ENCODE measurements at regions of chr10 and their contacts with region 1.

Region 1: DNA sequence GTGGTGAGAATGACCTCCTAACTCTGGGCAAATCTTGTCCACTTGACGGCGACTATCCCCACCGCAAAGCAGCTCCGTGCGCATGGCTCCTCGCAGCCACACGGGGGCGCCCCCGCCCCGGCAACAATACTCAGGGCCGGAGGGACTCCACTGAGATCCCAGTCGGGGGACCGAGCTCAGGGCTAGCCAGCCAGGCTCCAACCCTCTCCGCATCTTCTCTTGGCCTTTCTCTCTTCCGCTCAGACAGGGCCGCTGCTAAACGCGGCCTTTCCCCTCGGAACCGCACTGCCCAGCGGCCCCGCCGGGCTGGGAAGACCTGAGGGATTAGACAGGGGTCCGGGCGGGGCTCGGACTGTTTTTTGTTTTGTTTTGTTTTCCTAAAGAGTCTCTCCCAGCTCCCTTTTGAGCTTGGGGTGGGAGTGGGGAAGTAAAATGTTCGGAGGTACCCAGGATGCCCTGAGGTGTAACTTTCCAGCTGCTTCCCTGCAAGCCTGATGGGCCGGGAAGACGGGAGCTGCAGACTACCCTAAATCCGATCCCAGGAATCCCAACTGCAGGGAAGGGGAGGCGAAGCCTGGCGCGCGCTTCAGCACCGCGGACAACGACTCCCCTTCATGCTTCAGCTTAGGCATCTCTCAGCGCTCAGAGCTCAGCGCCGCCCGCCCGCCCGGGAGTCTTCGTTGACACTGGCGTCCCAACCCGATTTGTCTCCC is 2.7 kb downstream of the KCNIP2 start:
- DNase-seq: peak in 34 of 35 experiments; percentile 40 to 82 (median 59)
- ATAC-seq: peak; percentile 55 to 60 (median 57)
- H3K4me3 ChIP-seq: peak overlapping the region; percentile 42 to 65
- H3K4me3 Mint-ChIP-seq: peak overlapping the region; percentile 83 to 87 (median 83)
- H3K27ac ChIP-seq: no peak overlapping the region
- H3K27ac Mint-ChIP-seq: peak overlapping the region in 1 of 2 donors; percentile 25
- H3K4me1 ChIP-seq: peaks cover 16 to 46% of the 10 kb centered on the region in 2 experiments
- H3K4me1 Mint-ChIP-seq: peaks cover 50 to 62% (median 51%) of the 10 kb centered on the region in 3 donors
- H3K27me3 ChIP-seq: peaks cover 0 to 20% of the 10 kb centered on the region in 2 experiments
- H3K27me3 Mint-ChIP-seq: no peaks in the 10 kb centered on the region

Region 2: DNA sequence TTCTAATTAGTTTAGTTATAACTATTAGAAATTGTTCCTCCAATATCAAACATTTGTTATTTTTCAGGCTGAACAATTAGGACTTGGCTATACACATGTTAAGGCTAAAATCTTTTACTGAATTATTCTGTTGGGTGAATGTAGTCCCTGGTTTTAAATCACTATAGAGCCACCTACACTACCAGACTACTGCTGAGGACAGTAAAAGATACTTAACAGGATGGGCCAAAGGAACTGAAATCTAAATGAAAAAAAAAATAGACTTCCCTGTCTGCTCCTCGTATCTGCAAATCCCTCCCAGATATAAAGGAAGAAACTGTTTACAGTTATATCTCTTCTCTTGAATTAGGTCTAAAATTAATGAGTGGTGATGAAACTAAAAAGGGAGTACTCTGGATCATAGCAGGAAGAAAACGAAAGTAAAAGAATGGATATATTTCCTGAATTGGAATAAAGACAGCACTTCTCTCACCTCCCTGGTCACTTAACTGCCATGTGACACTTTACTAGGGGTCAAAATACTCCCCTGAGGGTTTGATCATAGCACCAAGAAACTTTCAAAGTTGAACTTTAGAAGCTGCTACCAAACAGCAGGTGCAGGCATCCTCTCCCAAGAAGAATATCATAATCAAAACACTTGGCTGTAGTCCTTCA is 158.6 kb before region 1 on chr10:
- CTCF ChIA-PET with region 1: no interaction called
- POLR2A ChIA-PET with region 1: no interaction called
- DNase-seq: no peak
- ATAC-seq: no peak
- H3K4me3 ChIP-seq: no peak overlapping the region
- H3K4me3 Mint-ChIP-seq: no peak overlapping the region
- H3K27ac ChIP-seq: no peak overlapping the region
- H3K27ac Mint-ChIP-seq: peak overlapping the region in 1 of 2 donors; percentile 48
- H3K4me1 ChIP-seq: peaks cover 0 to 4% of the 10 kb centered on the region in 2 experiments
- H3K4me1 Mint-ChIP-seq: peaks cover 41 to 47% (median 44%) of the 10 kb centered on the region in 3 donors
- H3K27me3 ChIP-seq: no peaks in the 10 kb centered on the region
- H3K27me3 Mint-ChIP-seq: no peaks in the 10 kb centered on the region

Region 3: GRCh38 chr10:101797403-101798059 is 43.4 kb before region 1 on chr10:
- CTCF ChIA-PET with region 1: interaction called in 1 of 2 experiments, 4 read pairs
- POLR2A ChIA-PET with region 1: interaction called in 1 of 2 experiments, 17 read pairs
- DNase-seq: no peak
- ATAC-seq: no peak
- H3K4me3 ChIP-seq: no peak overlapping the region
- H3K4me3 Mint-ChIP-seq: no peak overlapping the region
- H3K27ac ChIP-seq: no peak overlapping the region
- H3K27ac Mint-ChIP-seq: no peak overlapping the region
- H3K4me1 ChIP-seq: peaks cover 0 to 15% of the 10 kb centered on the region in 2 experiments
- H3K4me1 Mint-ChIP-seq: peaks cover 38 to 48% (median 41%) of the 10 kb centered on the region in 3 donors
- H3K27me3 ChIP-seq: no peaks in the 10 kb centered on the region
- H3K27me3 Mint-ChIP-seq: no peaks in the 10 kb centered on the region

Region 4: GRCh38 chr10:101818119-101818871 is 22.6 kb before region 1 on chr10 and contains the start of gene OGA:
- CTCF ChIA-PET with region 1: interaction called, 6 to 28 read pairs
- POLR2A ChIA-PET with region 1: interaction called in 1 of 2 experiments, 5 read pairs
- DNase-seq: peak; percentile 90 to 99 (median 98)
- ATAC-seq: peak; percentile 91 to 92 (median 91)
- H3K4me3 ChIP-seq: peak within 1 kb of the TSS; percentile 95 to 100
- H3K4me3 Mint-ChIP-seq: peak within 1 kb of the TSS; percentile 94 to 99 (median 98)
- H3K27ac ChIP-seq: peak within 1 kb of the TSS; percentile 74
- H3K27ac Mint-ChIP-seq: peak within 1 kb of the TSS; percentile 96 to 98
- H3K4me1 ChIP-seq: peaks cover 26 to 29% of the 10 kb centered on the region in 2 experiments
- H3K4me1 Mint-ChIP-seq: peaks cover 41 to 61% (median 46%) of the 10 kb centered on the region in 3 donors
- H3K27me3 ChIP-seq: no peaks in the 10 kb centered on the region
- H3K27me3 Mint-ChIP-seq: no peaks in the 10 kb centered on the region
- total RNA-seq, gene OGA: 232 to 364 (median 244) TPM

Region 5: GRCh38 chr10:101889256-101890210 is 48.6 kb after region 1 on chr10:
- CTCF ChIA-PET with region 1: interaction called, 5 to 17 read pairs
- POLR2A ChIA-PET with region 1: no interaction called
- DNase-seq: peak; percentile 19 to 72 (median 57)
- ATAC-seq: peak; percentile 58 to 61 (median 60)
- H3K4me3 ChIP-seq: no peak overlapping the region
- H3K4me3 Mint-ChIP-seq: no peak overlapping the region
- H3K27ac ChIP-seq: no peak overlapping the region
- H3K27ac Mint-ChIP-seq: peak overlapping the region in 1 of 2 donors; percentile 11
- H3K4me1 ChIP-seq: no peaks in the 10 kb centered on the region
- H3K4me1 Mint-ChIP-seq: peaks cover 0 to 6% (median 2%) of the 10 kb centered on the region in 3 donors
- H3K27me3 ChIP-seq: no peaks in the 10 kb centered on the region
- H3K27me3 Mint-ChIP-seq: no peaks in the 10 kb centered on the region

Region 6: DNA sequence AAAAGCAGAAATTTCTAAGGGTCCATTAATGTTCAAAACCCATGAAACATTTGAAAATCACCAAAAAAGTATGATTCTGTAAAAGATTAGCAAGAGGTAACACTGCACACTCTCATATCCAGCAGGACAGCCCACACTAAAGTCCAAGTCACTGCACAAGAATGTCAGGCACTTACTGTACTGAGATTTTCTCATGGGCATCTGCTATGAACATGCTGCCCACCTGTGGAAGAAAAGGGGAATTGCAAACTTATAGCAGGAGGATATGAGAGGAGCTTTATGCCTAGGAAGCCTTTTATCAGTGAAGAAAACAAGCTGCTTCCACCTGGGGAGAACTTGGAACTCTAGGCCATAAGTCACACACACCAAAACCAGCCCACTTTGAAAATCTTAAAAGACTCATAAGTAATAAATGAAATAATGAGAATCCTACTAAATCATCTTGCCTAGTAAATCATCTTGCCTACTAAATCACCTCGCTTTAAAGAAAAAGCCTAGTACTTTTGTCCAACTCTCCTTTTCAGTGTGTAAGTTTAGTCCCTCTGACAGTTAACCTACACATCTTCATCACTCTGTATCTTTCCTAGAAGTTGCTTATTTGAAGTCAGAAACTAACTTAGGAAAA is 169.0 kb after region 1 on chr10:
- CTCF ChIA-PET with region 1: interaction called, 4 to 62 read pairs
- POLR2A ChIA-PET with region 1: no interaction called
- DNase-seq: peak in 28 of 35 experiments; percentile 1 to 71 (median 18)
- ATAC-seq: peak; percentile 76 to 84 (median 79)
- H3K4me3 ChIP-seq: no peak overlapping the region
- H3K4me3 Mint-ChIP-seq: no peak overlapping the region
- H3K27ac ChIP-seq: no peak overlapping the region
- H3K27ac Mint-ChIP-seq: no peak overlapping the region
- H3K4me1 ChIP-seq: no peaks in the 10 kb centered on the region
- H3K4me1 Mint-ChIP-seq: peaks cover 0 to 10% (median 0%) of the 10 kb centered on the region in 3 donors
- H3K27me3 ChIP-seq: no peaks in the 10 kb centered on the region
- H3K27me3 Mint-ChIP-seq: no peaks in the 10 kb centered on the region

Region 7: GRCh38 chr10:102072673-102073527 is 232.0 kb after region 1 on chr10:
- CTCF ChIA-PET with region 1: interaction called, 6 to 16 read pairs
- POLR2A ChIA-PET with region 1: no interaction called
- DNase-seq: peak; percentile 43 to 88 (median 74)
- ATAC-seq: peak; percentile 86 to 96 (median 91)
- H3K4me3 ChIP-seq: no peak overlapping the region
- H3K4me3 Mint-ChIP-seq: no peak overlapping the region
- H3K27ac ChIP-seq: no peak overlapping the region
- H3K27ac Mint-ChIP-seq: no peak overlapping the region
- H3K4me1 ChIP-seq: peaks cover 0 to 4% of the 10 kb centered on the region in 2 experiments
- H3K4me1 Mint-ChIP-seq: peaks cover 12 to 14% (median 14%) of the 10 kb centered on the region in 3 donors
- H3K27me3 ChIP-seq: no peaks in the 10 kb centered on the region
- H3K27me3 Mint-ChIP-seq: no peaks in the 10 kb centered on the region